ENCODE measurements at regions of chr2 and their contacts with region 1.

Region 1: DNA sequence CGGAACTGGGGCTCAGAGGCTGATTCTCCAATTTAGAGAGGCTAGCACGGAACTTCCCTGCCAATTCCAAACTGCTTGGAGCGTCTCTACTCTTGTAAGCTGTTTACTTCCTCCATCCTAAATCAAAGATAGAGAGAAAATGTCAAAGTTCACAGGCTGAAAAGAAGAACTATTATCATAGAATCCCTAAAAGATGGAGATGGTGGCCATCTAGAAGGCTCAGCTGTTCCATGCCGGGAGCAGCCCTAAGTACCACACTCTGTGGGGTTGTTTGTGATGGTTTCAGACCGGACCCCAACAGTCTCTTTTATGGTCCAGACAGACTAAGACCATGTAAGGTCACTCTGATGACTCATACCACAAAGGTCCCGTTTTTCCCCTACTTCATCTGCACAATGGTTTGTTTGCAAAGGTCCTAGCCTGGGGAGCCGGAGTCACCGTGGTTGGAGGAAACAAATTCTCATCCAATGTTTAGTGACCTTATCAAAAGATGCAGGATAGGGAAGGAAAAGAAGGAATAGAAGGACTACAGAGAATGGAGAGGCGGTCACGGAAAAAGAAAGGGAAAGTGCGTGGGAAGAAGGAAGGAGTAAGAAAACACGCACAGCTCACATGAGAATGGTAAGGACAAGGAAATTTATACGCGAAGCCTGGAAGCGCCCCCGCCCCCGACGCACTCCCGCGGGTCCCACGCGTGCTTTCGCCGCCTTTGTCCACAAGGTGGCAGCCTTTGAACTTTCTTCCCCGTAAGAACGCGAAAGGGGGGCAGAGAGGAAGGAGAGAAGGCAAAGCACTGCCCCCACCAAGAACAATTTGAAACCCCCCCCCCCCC is 453 bp upstream of the ANTXR1 start:
- DNase-seq: peak; percentile 64
- H3K4me3 Mint-ChIP-seq: peak overlapping the region; percentile 99
- H3K27ac Mint-ChIP-seq: peak overlapping the region; percentile 31
- H3K4me1 Mint-ChIP-seq: peaks cover 12% of the 10 kb centered on the region
- H3K27me3 Mint-ChIP-seq: no peaks in the 10 kb centered on the region
- CTCF ChIP-seq: peak; percentile 81

Region 2: DNA sequence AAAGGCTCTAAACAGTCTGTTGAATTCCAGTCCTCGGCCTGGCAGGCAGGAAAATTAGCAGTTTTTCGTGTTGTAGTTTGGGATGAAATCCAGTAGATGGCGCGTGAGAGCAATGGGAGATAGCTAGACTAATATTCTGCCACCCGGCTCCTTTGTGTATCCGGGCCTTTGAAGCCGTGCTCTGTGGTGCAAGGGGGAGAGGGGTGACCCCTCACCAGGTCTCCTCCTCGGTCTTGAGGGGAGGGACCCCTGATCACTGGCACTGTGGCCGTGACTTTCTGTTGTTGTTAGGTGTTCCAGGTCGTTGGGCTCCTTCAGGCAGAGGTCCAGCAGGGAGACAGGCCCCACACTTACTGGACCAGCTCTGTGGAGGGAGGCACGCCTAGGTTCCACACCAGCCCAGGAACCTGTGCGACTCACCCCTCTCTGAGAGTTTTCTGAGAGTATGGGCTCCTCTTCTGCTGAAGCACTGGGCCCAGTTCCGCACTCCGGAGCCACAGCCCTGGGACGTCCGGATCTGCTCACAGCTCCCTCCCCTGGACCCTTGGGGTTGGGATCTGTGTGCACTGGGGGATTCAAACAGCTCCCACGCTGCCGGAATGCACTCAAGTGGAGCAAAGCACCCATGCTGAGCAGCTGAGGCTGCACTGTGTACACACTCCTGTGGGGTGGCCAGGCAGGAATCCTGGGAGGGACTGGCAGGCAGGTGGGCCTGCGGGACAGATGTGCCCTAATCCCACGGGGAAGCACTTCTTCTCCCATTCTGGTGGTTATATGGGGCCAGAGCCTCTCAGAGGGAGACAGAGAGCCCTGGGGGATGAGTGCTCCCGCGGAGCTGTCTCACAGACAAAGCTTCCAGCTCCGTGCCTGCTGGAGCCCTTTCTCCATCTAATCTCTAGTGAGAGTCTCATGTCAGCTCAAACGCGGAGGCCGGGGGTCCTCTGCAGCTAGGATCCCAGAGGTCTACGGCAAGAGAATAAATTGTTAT is 68.7 kb before region 1 on chr2:
- CTCF ChIA-PET with region 1: interaction called, 9 read pairs
- POLR2A ChIA-PET with region 1: interaction called, 3 read pairs
- intact Hi-C with region 1: loop called (anchors 1 kb)
- DNase-seq: peak; percentile 79
- H3K4me3 Mint-ChIP-seq: no peak overlapping the region
- H3K27ac Mint-ChIP-seq: no peak overlapping the region
- H3K4me1 Mint-ChIP-seq: no peaks in the 10 kb centered on the region
- H3K27me3 Mint-ChIP-seq: no peaks in the 10 kb centered on the region
- CTCF ChIP-seq: peak; percentile 72

Region 3: DNA sequence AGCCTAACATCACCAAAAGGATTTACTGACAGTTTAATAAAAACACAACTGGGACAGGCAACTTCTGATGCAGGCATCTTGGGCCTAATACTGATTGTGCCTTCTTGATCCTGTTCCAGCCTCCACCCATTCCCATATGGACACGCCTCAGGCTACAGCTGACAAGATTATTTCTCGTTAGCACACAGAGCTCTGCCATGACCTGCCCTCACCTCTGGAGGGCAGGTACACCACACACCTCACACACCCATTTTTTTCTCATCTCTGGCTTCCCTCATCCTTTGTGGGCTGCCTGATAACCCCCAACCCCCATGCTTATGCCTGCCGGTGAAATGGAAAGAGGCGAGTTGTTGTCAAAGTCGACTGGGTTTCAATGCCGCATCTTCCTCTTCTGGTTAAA is 147.5 kb after region 1 on chr2:
- CTCF ChIA-PET with region 1: interaction called, 4 read pairs
- POLR2A ChIA-PET with region 1: interaction called, 3 read pairs
- intact Hi-C with region 1: loop called (anchors 1 kb)
- DNase-seq: peak; percentile 91
- H3K4me3 Mint-ChIP-seq: no peak overlapping the region
- H3K27ac Mint-ChIP-seq: peak overlapping the region; percentile 52
- H3K4me1 Mint-ChIP-seq: peaks cover 19% of the 10 kb centered on the region
- H3K27me3 Mint-ChIP-seq: no peaks in the 10 kb centered on the region
- CTCF ChIP-seq: peak; percentile 75

Measured in MCF 10A (cell line).